Mammary epithelial cell (primary cell): ENCODE measurements at regions of chr14 and their contacts with region 1.

Region 1: GRCh38 chr14:72516936-72517700 is 376.8 kb downstream of the DPF3 start:
- DNase-seq: peak; percentile 64
- H3K4me3 ChIP-seq: no peak overlapping the region
- H3K27ac ChIP-seq: no peak overlapping the region
- H3K4me1 ChIP-seq: no peaks in the 10 kb centered on the region
- H3K27me3 ChIP-seq: no peaks in the 10 kb centered on the region
- CTCF ChIP-seq: peak; percentile 87 to 92

Region 2: GRCh38 chr14:71566276-71566675 is 950.8 kb before region 1 on chr14:
- CTCF ChIA-PET with region 1: interaction called, 10 read pairs
- dilution Hi-C with region 1: no loop called
- in situ Hi-C with region 1: no loop called
- intact Hi-C with region 1: no loop called
- DNase-seq: no peak
- H3K4me3 ChIP-seq: no peak overlapping the region
- H3K27ac ChIP-seq: no peak overlapping the region
- H3K4me1 ChIP-seq: peaks cover 7% of the 10 kb centered on the region
- H3K27me3 ChIP-seq: no peaks in the 10 kb centered on the region
- CTCF ChIP-seq: no peak

Region 3: DNA sequence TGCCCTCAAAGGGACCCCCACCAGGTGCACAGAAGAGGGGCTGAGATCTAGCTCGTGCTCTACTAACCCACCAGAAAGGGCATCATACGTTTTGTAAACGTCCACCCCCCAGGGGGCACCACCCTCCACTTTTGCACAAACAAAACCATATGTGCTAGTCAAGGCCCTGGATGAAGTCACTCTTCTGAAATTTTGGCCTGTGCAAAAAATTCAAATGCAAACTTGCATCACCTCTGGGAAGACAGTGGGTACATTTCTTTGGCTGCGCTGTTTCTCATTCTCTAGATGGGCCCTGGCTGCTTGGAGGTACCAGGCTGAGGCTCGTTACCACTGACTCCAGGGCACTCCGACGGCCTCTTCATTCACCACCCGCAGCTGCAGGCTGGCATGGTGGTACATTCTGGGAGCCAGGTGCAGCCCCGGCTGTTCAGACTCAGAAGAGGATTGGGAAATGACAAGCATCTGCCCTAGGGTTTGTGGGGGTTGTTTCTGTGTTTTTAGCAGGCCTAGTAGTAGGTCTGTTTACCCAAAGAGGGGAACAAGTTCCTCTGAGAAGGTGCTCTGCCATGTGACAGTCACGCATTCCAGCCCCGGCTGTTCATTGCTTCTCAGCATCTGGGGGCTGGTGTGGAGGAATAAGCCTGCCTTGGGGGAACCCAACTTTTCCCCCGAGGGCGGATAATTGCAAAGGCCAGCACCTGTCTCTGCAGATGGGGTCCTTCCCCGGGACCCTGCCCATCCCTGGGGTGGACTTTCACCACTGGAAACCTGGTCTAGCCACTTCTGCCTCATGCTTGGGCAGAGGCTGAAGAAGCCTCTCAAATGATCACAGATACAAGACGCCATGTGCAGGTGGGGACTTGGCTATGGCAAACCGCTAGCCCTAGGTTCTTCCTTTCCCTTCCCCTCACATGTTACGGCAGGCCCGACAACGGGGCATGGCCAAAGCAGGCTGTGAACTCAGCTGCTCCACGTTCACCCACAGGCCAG is 229.2 kb after region 1 on chr14:
- CTCF ChIA-PET with region 1: no interaction called
- dilution Hi-C with region 1: no loop called
- in situ Hi-C with region 1: no loop called
- intact Hi-C with region 1: loop called (anchors 5 kb)
- DNase-seq: peak; percentile 37
- H3K4me3 ChIP-seq: no peak overlapping the region
- H3K27ac ChIP-seq: peak overlapping the region; percentile 44
- H3K4me1 ChIP-seq: peaks cover 20% of the 10 kb centered on the region
- H3K27me3 ChIP-seq: no peaks in the 10 kb centered on the region
- CTCF ChIP-seq: no peak

Region 4: GRCh38 chr14:72904840-72905561 is 387.9 kb after region 1 on chr14:
- CTCF ChIA-PET with region 1: interaction called, 22 read pairs
- dilution Hi-C with region 1: no loop called
- in situ Hi-C with region 1: loop called (anchors 5 kb)
- intact Hi-C with region 1: loop called (anchors 1 kb)
- DNase-seq: peak; percentile 66
- H3K4me3 ChIP-seq: no peak overlapping the region
- H3K27ac ChIP-seq: no peak overlapping the region
- H3K4me1 ChIP-seq: peaks cover 27% of the 10 kb centered on the region
- H3K27me3 ChIP-seq: no peaks in the 10 kb centered on the region
- CTCF ChIP-seq: peak; percentile 94 to 97

Region 5: GRCh38 chr14:73058224-73058921 is 541.3 kb after region 1 on chr14 and contains the start of gene RBM25:
- CTCF ChIA-PET with region 1: interaction called, 5 read pairs
- dilution Hi-C with region 1: no loop called
- in situ Hi-C with region 1: no loop called
- intact Hi-C with region 1: loop called (anchors 5 kb)
- DNase-seq: peak; percentile 98
- H3K4me3 ChIP-seq: peak within 1 kb of the TSS; percentile 90 to 92 (median 91)
- H3K27ac ChIP-seq: peak within 1 kb of the TSS; percentile 96
- H3K4me1 ChIP-seq: peaks cover 14% of the 10 kb centered on the region
- H3K27me3 ChIP-seq: no peaks in the 10 kb centered on the region
- CTCF ChIP-seq: no peak
- total RNA-seq, gene RBM25: 27.2 to 87.7 TPM

Region 6: DNA sequence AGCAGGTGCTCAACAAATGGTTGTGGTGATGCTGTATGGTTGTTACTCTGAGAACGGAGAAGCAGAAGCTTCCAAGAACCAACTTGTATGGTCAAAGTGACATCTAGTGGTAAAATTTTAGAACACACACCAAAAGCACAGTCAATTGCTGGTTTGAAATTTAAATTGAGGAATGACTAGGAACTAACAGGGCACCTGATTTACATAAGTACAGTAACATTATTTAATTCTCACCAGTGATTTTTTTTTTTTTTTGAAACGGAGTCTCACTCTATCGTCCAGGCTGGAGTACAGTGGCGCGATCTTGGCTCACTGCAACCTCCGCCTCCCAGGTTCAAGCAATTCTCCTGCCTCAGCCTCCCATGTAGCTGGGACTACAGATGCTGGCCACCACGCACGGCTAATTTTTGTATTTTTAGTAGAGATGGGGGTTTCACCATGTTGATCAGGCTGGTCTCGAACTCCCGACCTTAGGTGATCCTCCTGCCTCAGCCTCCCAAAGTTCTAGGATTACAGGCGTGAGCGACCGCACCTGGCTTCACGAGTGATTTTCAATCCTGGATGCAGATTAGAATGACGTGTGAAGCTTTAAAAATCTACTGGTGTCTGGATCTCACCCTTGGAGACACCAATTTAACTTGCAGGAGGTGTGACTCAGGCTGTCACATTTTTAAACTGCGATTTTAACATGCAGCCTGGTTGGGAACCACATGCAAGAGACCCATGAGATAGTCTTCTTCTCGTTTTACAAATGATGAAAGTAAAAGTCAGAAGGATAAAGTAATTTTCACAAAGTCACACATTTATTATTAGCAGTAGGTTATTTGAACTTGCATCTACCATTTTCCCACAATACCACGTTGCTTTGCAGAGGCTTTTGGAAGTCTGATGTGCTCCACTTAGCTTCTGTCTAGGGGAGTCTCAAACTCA is 955.3 kb after region 1 on chr14:
- CTCF ChIA-PET with region 1: interaction called, 7 read pairs
- dilution Hi-C with region 1: no loop called
- in situ Hi-C with region 1: no loop called
- intact Hi-C with region 1: loop called (anchors 5 kb)
- DNase-seq: peak; percentile 54
- H3K4me3 ChIP-seq: no peak overlapping the region
- H3K27ac ChIP-seq: no peak overlapping the region
- H3K4me1 ChIP-seq: peaks cover 3% of the 10 kb centered on the region
- H3K27me3 ChIP-seq: no peaks in the 10 kb centered on the region
- CTCF ChIP-seq: peak; percentile 64 to 67